Esophagus squamous epithelium (tissue), 5 donors: ENCODE measurements at regions of chr2 and their contacts with region 1.

Region 1: GRCh38 chr2:157492189-157492773 is 48.4 kb upstream of the CYTIP start:
- DNase-seq: no peak
- H3K4me3 ChIP-seq: no peak overlapping the region
- H3K27ac ChIP-seq: no peak overlapping the region
- H3K4me1 ChIP-seq: no peaks in the 10 kb centered on the region
- H3K27me3 ChIP-seq: peaks cover 0 to 10% (median 0%) of the 10 kb centered on the region in 4 donors
- CTCF ChIP-seq: peak; percentile 45 to 75 (median 60)
- POLR2A ChIP-seq: no peak

Region 2: DNA sequence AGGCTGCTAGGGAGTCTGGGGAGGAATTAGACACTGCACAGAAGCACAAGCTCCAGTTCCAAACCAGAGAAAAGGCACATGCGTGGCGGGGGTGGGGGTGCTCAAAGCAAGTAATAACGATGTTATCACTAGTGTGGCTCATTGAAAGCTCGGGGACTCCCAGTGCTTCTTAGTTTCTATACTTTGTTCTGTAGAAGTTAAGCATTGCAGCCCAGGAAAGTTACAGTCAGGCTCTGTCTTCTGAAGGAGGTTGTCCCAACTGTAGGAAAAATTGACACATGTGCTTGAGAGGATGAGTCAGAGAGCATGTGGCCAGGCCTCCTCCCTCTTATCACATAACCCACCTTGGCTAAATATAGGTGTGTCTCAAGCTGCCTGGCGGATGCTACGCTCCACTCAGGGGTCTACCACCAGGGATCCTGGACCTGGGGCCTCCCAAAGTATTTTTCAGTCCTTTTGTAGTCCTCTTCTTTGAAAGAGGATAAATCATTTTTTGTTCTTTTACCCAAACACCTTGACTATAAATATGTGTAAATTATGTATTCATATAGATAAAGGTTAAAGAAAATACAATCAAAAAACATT is 231.0 kb before region 1 on chr2:
- intact Hi-C with region 1: no loop called
- DNase-seq: no peak
- H3K4me3 ChIP-seq: peak overlapping the region in 1 of 4 donors; percentile 30
- H3K27ac ChIP-seq: peak overlapping the region; percentile 46 to 76 (median 52)
- H3K4me1 ChIP-seq: peaks cover 0 to 55% (median 9%) of the 10 kb centered on the region in 3 donors
- H3K27me3 ChIP-seq: no peaks in the 10 kb centered on the region
- CTCF ChIP-seq: no peak
- POLR2A ChIP-seq: no peak

Region 3: GRCh38 chr2:157596992-157597681 is 104.9 kb after region 1 on chr2:
- intact Hi-C with region 1: loop called (anchors 10 kb)
- DNase-seq: no peak
- H3K4me3 ChIP-seq: peak overlapping the region in 3 of 4 donors; percentile 6 to 42 (median 23)
- H3K27ac ChIP-seq: no peak overlapping the region
- H3K4me1 ChIP-seq: peaks cover 0 to 7% (median 0%) of the 10 kb centered on the region in 3 donors
- H3K27me3 ChIP-seq: peaks cover 0 to 17% (median 0%) of the 10 kb centered on the region in 4 donors
- CTCF ChIP-seq: peak in 3 of 6 experiments; percentile 16 to 49 (median 32)
- POLR2A ChIP-seq: no peak

Region 4: GRCh38 chr2:158806941-158807340 is 1314.7 kb after region 1 on chr2:
- intact Hi-C with region 1: no loop called
- DNase-seq: no peak
- H3K4me3 ChIP-seq: no peak overlapping the region
- H3K27ac ChIP-seq: no peak overlapping the region
- H3K4me1 ChIP-seq: peaks cover 0 to 48% (median 0%) of the 10 kb centered on the region in 3 donors
- H3K27me3 ChIP-seq: no peaks in the 10 kb centered on the region
- CTCF ChIP-seq: no peak
- POLR2A ChIP-seq: no peak